ENCODE measurements at regions of chr10 and their contacts with region 1.

Region 1: DNA sequence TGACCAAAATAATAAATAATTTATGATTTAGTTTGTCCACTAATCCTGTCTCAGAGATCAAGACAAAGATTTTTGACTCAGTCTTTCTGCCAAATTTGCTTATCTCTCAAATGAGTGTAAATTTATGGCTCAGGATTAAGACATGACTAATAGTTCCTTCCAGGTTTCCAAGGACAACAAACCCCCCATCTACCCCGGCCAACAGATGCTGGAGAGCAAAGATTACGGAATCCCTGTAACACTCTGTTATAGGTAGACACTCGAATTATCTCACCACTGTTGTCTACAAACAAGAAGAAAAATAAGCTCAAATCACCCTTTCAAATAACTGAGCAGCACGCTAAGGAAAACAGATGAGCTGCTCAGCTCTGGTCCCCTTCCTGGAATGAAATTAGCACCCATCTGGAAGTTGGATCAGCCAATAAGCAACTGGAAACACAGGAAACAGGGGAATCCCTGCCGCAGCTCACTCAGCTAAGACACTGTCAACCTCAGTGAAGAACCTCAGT is 56.8 kb upstream of the SVIL start:
- DNase-seq: peak; percentile 97
- H3K4me3 ChIP-seq: peak overlapping the region in 1 of 3 experiments; percentile 57
- H3K27ac ChIP-seq: peak overlapping the region; percentile 100
- H3K4me1 ChIP-seq: peaks cover 49% of the 10 kb centered on the region
- H3K27me3 ChIP-seq: no peaks in the 10 kb centered on the region
- CTCF ChIP-seq: no peak
- POLR2A ChIP-seq: peak; percentile 28

Region 2: DNA sequence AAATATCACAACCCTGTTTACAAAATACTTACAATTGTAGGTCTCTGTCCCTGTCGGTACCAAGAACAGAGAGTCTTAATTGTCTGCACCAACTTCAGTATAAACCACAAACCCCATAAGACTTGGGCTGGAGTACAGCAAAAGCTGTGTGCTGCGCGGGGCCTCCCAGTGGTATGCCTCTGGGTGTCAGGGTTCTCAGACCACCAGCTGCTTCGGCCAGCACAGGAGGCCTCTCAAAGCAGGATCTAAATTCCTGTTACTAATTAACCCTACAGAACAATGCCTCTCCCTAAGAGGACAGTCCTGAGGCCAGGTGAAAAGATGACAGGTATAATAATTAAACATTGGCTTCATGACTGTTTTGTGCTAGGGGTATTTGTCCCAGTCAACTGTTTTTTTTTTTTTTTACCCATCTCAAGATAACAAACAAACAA is 55.9 kb before region 1 on chr10:
- CTCF ChIA-PET with region 1: interaction called, 3 read pairs
- POLR2A ChIA-PET with region 1: no interaction called
- dilution Hi-C with region 1: no loop called
- intact Hi-C with region 1: loop called (anchors 1 kb)
- DNase-seq: peak; percentile 57
- H3K4me3 ChIP-seq: no peak overlapping the region
- H3K27ac ChIP-seq: peak overlapping the region; percentile 93
- H3K4me1 ChIP-seq: peaks cover 37% of the 10 kb centered on the region
- H3K27me3 ChIP-seq: no peaks in the 10 kb centered on the region
- CTCF ChIP-seq: no peak
- POLR2A ChIP-seq: no peak

Region 3: GRCh38 chr10:29669149-29669548 is 22.5 kb before region 1 on chr10:
- CTCF ChIA-PET with region 1: interaction called, 3 read pairs
- POLR2A ChIA-PET with region 1: no interaction called
- dilution Hi-C with region 1: no loop called
- intact Hi-C with region 1: loop called (anchors 1 kb)
- DNase-seq: peak; percentile 78
- H3K4me3 ChIP-seq: no peak overlapping the region
- H3K27ac ChIP-seq: peak overlapping the region; percentile 58
- H3K4me1 ChIP-seq: peaks cover 31% of the 10 kb centered on the region
- H3K27me3 ChIP-seq: no peaks in the 10 kb centered on the region
- CTCF ChIP-seq: peak in 1 of 2 donors; percentile 17
- POLR2A ChIP-seq: peak; percentile 32

Region 4: DNA sequence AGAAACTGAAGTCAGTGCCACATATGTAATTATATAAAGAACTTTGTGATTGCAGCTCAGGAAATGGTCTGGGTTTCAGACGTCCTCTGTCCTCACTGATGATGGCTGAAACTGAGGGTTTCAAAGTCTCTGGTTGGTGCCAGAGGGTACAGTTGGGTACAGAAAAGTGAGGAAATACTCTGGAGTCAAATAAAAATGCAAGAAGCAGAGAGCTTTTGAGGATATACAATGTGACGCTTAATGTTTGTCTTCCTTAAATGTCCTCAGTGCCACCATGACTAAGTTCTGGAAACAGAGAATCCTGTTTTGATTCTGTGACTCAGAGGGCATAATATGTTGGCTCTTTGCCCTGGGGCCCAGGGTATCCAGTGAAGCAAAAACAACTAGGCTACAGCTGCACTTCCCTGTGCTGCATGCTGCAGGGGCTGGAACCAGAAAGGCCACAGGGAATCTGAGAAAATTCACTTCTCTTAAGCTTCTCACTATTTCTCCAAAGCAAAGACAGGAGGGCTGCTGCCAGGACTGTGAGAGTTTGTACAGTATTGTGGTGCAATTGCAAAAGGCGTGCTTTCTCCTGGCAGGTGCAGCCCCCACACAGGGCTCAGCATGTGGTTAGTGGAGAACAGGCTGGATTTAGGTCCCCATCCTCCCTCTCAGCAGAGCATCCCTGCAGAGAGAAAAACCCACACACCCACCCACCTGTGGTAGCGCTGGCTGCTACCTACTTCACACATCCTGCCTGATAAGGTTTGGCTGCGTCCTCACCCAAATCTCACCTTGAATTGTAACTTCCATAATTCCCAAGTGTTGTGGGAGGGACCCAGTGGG is 112.6 kb after region 1 on chr10:
- CTCF ChIA-PET with region 1: no interaction called
- POLR2A ChIA-PET with region 1: no interaction called
- dilution Hi-C with region 1: no loop called
- intact Hi-C with region 1: loop called (anchors 1 kb)
- DNase-seq: peak; percentile 99
- H3K4me3 ChIP-seq: peak overlapping the region in 1 of 3 experiments; percentile 31
- H3K27ac ChIP-seq: peak overlapping the region; percentile 99
- H3K4me1 ChIP-seq: peaks cover 54% of the 10 kb centered on the region
- H3K27me3 ChIP-seq: no peaks in the 10 kb centered on the region
- CTCF ChIP-seq: no peak
- POLR2A ChIP-seq: no peak

Measured in endothelial cell of umbilical vein (primary cell).